GM12878 (cell line): ENCODE measurements at regions of chr15 and their contacts with region 1.

Region 1: DNA sequence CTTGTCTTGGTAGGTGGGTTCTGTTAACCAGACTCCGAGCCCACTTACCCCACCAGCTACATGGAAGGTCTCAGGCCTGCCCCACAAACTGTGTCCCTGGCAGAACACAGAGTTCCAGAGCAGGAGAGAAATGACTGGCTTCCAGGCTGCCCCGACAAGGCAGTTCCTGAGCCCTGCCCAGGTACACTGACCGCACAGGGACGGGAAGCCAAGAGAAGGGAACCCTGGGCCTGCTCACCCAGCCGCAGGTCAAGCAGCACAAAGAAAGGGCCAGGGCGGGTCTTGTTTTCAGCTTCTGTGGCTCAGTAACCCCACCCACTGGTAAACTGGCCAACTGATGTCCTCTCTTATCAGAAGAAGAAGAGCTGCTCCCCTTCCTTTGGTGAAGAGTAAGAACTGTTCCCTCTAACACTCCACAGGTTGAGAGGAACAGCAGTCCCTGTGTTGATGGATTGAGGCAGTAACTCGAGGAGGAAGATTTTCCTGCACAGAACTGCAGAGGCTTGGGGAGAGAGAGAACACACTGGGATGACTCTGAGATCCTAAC is 68.4 kb downstream of the CRTC3 start:
- DNase-seq: peak; percentile 46
- ATAC-seq: peak; percentile 64
- H3K4me3 ChIP-seq: peak overlapping the region; percentile 44; the same call in 1 of the 2 replicates
- H3K27ac ChIP-seq: peak overlapping the region; percentile 82
- H3K4me1 ChIP-seq: peaks cover 54% of the 10 kb centered on the region
- H3K27me3 ChIP-seq: no peaks in the 10 kb centered on the region
- CTCF ChIP-seq: peak; percentile 32 to 57 (median 44); a peak in 5 of 6 replicates
- EP300 ChIP-seq: no peak
- POLR2A ChIP-seq: peak; percentile 59
- RAD21 ChIP-seq: peak; percentile 70

Region 2: DNA sequence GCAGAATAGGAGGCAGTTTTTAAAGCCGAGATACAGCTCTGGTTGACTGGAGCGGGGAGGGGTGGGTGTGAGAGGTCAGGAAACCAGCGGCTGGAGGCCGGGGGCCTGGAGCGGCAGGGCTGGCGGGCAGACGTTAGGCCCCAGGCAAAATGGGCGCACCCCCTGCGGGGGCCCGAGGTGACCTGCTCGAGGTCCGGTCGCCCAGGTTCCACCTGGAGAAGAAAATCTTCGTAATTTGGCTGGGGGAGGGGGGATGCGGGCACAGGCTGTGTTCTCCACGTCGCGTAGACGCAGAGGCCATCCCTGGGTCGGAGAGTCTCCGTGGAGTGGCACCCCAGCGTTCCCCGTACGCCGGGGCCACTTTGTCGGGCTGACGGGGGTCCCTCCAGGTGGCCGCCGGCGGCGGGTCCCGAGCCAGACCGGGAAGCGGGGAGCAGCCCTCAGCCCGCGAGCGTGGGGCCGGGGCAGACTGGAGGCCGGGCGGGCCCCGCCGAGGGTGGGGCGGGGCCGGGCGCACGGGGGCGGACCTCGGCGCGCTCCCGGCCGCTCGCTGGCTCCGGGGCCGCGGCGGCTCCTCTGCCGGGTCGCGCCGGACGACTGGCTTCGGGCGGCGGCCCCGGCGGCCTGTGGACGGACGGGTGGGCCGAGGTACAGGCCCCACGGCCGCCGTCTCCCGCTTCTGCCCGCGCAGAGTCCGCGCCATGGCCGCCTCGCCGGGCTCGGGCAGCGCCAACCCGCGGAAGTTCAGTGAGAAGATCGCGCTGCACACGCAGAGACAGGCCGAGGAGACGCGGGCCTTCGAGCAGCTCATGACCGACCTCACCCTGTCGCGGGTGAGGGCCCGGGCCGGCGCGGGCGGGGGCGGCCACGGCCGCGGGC is 68.5 kb before region 1 on chr15 and contains the start of gene CRTC3:
- CTCF ChIA-PET with region 1: interaction called, 13 read pairs
- POLR2A ChIA-PET with region 1: interaction called, 3 read pairs
- RAD21 ChIA-PET with region 1: interaction called, 12 read pairs
- SMC1A ChIA-PET with region 1: interaction called, 8 read pairs
- in situ Hi-C with region 1: no loop called
- intact Hi-C with region 1: loop called (anchors 5 kb)
- DNase-seq: no peak
- ATAC-seq: peak; percentile 89
- H3K4me3 ChIP-seq: peak within 1 kb of the TSS; percentile 71
- H3K27ac ChIP-seq: peak within 1 kb of the TSS; percentile 84
- H3K4me1 ChIP-seq: peaks cover 7% of the 10 kb centered on the region
- H3K27me3 ChIP-seq: no peaks in the 10 kb centered on the region
- CTCF ChIP-seq: 0 out of 6 replicates have a peak, but pooled peaks have one; percentile 1 to 15 (median 6)
- EP300 ChIP-seq: no peak
- POLR2A ChIP-seq: peak; percentile 82
- RAD21 ChIP-seq: no peak
- polyA plus RNA-seq, gene CRTC3: 3.5 to 4.2 TPM

Region 3: DNA sequence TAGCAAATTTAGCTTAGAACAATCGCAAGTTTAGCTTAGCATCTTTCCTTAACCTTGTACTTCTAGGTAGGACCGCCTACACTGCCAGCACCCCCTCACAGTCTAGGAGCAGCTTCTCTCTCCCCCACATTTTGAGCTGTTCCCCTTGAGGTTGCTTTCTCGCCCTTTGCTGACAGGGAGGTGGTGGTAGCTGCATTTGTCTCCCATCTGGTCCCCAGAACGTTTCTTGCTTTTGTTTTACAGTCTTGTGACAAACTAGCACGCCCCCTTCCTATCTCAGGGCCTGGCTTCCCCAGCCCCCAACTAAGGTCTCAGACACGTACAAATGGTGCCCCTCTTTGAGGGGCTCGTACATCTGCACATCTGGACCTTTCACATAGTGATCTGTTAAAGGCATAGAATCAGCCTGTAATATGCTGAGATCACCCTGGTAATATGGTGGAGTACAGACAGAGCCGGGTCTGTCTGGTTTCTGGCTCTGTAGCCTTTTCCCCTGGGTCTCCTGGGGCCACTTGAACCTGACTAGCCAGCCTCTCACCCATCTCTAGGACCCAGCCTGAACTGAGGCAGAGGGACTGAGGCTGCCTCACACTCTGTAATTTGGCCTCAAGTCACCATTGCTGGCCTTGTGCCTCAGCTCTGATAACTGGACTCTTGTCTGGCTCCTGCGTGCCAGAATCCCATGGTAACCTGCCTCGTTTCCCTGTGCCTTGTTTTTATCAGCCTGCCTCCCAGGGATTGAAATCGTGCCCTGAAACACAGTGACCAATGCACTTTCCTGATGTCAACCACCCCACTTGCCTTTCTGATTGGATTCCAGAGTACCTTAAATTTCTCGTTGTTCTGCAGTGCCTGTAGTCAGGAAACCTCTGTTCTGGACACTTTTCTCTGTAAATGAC is 40.7 kb before region 1 on chr15:
- CTCF ChIA-PET with region 1: interaction called, 12 read pairs
- POLR2A ChIA-PET with region 1: interaction called, 7 read pairs
- RAD21 ChIA-PET with region 1: interaction called, 16 read pairs
- SMC1A ChIA-PET with region 1: interaction called, 17 read pairs
- in situ Hi-C with region 1: no loop called
- intact Hi-C with region 1: loop called (anchors 5 kb)
- DNase-seq: no peak
- ATAC-seq: peak; percentile 39
- H3K4me3 ChIP-seq: no peak overlapping the region
- H3K27ac ChIP-seq: peak overlapping the region; percentile 80
- H3K4me1 ChIP-seq: peaks cover 22% of the 10 kb centered on the region
- H3K27me3 ChIP-seq: no peaks in the 10 kb centered on the region
- CTCF ChIP-seq: no peak
- EP300 ChIP-seq: no peak
- POLR2A ChIP-seq: peak; percentile 53
- RAD21 ChIP-seq: no peak

Region 4: DNA sequence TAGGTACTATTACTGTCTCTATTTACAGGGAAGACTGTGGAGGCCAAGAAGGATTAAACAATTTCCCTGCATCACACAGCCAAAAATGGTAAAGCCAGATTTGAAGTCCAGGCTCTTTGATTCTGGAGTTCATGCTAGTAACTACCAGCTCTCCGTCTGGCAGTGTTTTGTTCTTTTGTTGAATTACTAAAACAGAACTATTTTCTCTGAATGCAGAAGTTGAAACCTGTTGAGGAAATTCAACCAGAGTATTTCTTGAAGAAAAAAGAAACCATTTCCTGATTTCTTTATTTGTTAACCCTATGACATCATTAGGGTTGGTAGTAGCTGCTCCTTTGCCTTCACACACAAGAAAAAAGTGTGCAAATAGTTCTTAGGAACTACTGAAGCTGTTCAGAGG is 34.1 kb before region 1 on chr15:
- CTCF ChIA-PET with region 1: interaction called, 11 read pairs
- POLR2A ChIA-PET with region 1: interaction called, 3 read pairs
- RAD21 ChIA-PET with region 1: interaction called, 11 read pairs
- SMC1A ChIA-PET with region 1: interaction called, 10 read pairs
- in situ Hi-C with region 1: no loop called
- intact Hi-C with region 1: loop called (anchors 5 kb)
- DNase-seq: no peak
- ATAC-seq: peak; percentile 61
- H3K4me3 ChIP-seq: peak overlapping the region; percentile 14; the same call in 1 of the 2 replicates
- H3K27ac ChIP-seq: peak overlapping the region; percentile 63
- H3K4me1 ChIP-seq: peaks cover 45% of the 10 kb centered on the region
- H3K27me3 ChIP-seq: no peaks in the 10 kb centered on the region
- CTCF ChIP-seq: no peak
- EP300 ChIP-seq: no peak
- POLR2A ChIP-seq: no peak
- RAD21 ChIP-seq: no peak

Region 5: GRCh38 chr15:90571063-90571541 is 27.0 kb before region 1 on chr15:
- CTCF ChIA-PET with region 1: interaction called, 4 read pairs
- POLR2A ChIA-PET with region 1: interaction called, 9 read pairs
- RAD21 ChIA-PET with region 1: interaction called, 5 read pairs
- SMC1A ChIA-PET with region 1: interaction called, 13 read pairs
- in situ Hi-C with region 1: no loop called
- intact Hi-C with region 1: no loop called
- DNase-seq: no peak
- ATAC-seq: peak; percentile 83
- H3K4me3 ChIP-seq: peak overlapping the region; percentile 3; the same call in 1 of the 2 replicates
- H3K27ac ChIP-seq: peak overlapping the region; percentile 61
- H3K4me1 ChIP-seq: peaks cover 32% of the 10 kb centered on the region
- H3K27me3 ChIP-seq: no peaks in the 10 kb centered on the region
- CTCF ChIP-seq: no peak
- EP300 ChIP-seq: no peak
- POLR2A ChIP-seq: no peak
- RAD21 ChIP-seq: no peak

Region 6: DNA sequence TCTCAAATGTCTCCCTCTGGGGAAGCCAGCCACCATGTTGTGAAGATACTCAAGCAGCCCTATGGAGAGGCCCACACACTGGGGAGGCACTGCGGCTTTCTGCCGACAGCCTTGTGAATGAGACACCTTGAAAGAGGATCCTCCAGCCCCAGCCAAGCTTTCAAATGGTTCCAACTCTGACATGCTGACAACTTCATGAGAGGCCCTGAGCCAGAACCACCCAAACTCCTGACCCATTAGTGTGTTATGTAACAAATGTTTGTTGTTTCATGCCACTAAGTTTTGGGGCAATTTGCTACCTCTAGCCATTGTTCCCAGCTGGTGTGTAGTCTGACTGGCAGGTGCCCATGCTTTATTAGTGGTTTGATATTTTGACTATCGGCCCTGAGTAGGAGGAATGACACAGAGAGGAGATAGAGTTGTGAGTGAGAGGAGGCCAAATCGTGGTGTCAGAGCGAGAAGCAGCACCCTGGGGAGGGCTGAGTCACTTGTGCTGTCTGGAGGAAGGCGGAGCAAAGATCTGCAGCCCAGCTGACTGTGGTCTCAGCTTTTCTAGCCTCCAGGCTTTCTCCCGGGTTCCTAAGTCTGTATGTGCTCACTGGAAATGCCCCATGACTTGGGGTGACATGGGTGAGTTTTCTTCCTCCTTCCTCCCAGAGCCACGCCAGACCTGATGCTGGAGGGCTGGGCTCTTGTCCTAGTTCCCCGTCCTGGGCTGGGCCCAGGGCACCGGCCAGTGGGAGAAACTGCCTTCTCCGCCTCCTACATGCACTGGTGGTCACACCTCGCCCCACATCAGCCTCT is 62.3 kb after region 1 on chr15:
- CTCF ChIA-PET with region 1: no interaction called
- POLR2A ChIA-PET with region 1: no interaction called
- RAD21 ChIA-PET with region 1: interaction called, 3 read pairs
- SMC1A ChIA-PET with region 1: no interaction called
- in situ Hi-C with region 1: no loop called
- intact Hi-C with region 1: loop called (anchors 2 kb)
- DNase-seq: peak; percentile 86
- ATAC-seq: peak; percentile 72
- H3K4me3 ChIP-seq: peak overlapping the region; percentile 58
- H3K27ac ChIP-seq: peak overlapping the region; percentile 100
- H3K4me1 ChIP-seq: peaks cover 73% of the 10 kb centered on the region
- H3K27me3 ChIP-seq: no peaks in the 10 kb centered on the region
- CTCF ChIP-seq: no peak
- EP300 ChIP-seq: 0 out of 4 replicates have a peak, but pooled peaks of 1 of the 2 experiments have one; percentile 29
- POLR2A ChIP-seq: peak; percentile 77
- RAD21 ChIP-seq: no peak

Region 7: DNA sequence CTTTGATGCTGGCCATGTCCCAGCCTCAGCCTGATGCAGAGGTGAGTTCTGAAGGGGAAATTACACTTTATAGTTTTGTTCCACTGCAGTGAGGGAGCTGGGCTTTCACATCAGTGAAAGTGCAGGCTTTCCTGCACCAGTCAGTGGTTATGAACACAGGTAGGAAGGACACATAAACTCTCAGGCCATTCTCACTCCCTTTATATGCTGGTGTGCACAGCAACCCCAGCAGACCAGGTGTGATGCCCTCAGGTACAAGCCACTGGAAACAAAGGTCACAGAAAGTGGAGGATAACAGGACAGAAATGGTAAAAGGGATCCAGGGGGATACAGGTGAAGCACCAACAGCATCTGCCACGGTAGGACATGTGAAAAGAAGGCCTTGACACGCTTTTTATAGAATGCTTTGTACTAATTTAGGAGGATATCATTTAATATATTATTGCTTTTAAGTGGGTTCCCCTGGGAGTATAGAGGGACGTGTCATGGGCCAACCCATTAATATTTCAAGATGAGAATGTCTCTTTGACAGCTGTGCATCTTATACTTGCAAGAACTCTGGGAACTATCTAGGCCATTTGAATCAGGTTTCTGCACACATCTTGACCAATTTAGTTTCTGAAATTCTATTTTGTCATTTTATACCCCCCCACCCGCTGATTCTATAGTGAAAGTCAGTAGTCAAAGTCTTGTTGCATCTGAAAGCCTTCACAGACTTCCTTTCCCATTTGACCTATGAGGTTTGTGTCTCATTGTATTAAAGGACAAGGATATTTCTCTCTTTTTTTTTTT is 94.1 kb after region 1 on chr15:
- CTCF ChIA-PET with region 1: interaction called, 3 read pairs
- POLR2A ChIA-PET with region 1: no interaction called
- RAD21 ChIA-PET with region 1: no interaction called
- SMC1A ChIA-PET with region 1: no interaction called
- in situ Hi-C with region 1: no loop called
- intact Hi-C with region 1: loop called (anchors 5 kb)
- DNase-seq: peak; percentile 84
- ATAC-seq: peak; percentile 73
- H3K4me3 ChIP-seq: no peak overlapping the region
- H3K27ac ChIP-seq: peak overlapping the region; percentile 99
- H3K4me1 ChIP-seq: peaks cover 41% of the 10 kb centered on the region
- H3K27me3 ChIP-seq: no peaks in the 10 kb centered on the region
- CTCF ChIP-seq: no peak
- EP300 ChIP-seq: no peak
- POLR2A ChIP-seq: peak; percentile 68
- RAD21 ChIP-seq: peak; percentile 19; the same call in 1 of the 2 replicates

Region 8: DNA sequence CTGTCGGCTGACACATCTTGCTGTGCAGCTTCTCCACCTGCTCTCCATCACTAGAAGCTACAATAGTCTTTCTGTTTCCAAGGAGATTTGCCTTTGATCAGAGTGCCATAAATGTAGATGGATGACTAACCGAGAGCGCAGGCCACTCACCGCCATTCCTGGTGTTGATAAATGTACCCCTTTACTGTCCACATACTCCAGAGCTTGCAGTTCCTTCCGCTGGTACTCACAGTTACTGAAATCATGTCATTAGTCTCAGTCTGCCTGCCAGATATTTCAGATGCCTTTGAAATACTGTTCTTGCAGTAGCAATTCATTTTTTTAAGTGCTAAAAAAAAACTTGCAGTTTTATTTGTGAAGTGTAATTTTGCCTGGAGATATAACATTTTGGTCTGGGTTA is 191.4 kb after region 1 on chr15:
- CTCF ChIA-PET with region 1: no interaction called
- POLR2A ChIA-PET with region 1: no interaction called
- RAD21 ChIA-PET with region 1: no interaction called
- SMC1A ChIA-PET with region 1: no interaction called
- in situ Hi-C with region 1: no loop called
- intact Hi-C with region 1: no loop called
- DNase-seq: no peak
- ATAC-seq: no peak
- H3K4me3 ChIP-seq: no peak overlapping the region
- H3K27ac ChIP-seq: no peak overlapping the region
- H3K4me1 ChIP-seq: peaks cover 11% of the 10 kb centered on the region
- H3K27me3 ChIP-seq: no peaks in the 10 kb centered on the region
- CTCF ChIP-seq: no peak
- EP300 ChIP-seq: no peak
- POLR2A ChIP-seq: no peak
- RAD21 ChIP-seq: no peak

Region 9: DNA sequence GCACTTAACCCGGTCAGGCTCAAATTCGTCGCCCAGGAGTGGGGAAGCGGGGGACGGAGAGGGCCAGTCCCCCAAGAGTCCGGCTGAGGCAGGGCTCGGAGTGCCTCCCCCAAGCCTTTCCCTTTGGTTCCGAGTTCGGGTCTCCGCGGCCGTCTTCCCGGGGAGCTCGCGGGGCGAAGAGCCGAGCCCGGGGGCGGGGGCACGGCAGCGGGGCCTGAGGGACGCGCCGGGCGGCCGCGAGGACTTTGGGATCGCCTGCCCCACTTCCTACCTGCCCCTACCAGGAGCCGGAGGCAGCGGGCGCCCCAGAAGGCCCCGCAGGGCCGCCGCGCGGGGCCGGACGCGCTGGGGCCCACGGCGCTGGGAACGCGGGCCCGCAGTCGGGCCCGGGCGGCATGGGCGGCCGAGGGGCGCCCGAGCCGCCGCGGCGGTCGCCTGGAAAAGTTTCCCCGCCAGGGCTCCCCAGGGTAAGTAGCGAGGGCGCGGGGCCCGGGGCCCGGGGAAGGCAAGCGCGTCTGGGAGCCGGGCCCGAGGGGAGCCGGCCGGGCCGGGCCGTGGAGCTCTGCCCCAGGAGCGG is 273.1 kb after region 1 on chr15:
- CTCF ChIA-PET with region 1: no interaction called
- POLR2A ChIA-PET with region 1: no interaction called
- RAD21 ChIA-PET with region 1: no interaction called
- SMC1A ChIA-PET with region 1: no interaction called
- in situ Hi-C with region 1: no loop called
- intact Hi-C with region 1: no loop called
- DNase-seq: no peak
- ATAC-seq: peak; percentile 23
- H3K4me3 ChIP-seq: peak overlapping the region; percentile 94
- H3K27ac ChIP-seq: peak overlapping the region; percentile 79
- H3K4me1 ChIP-seq: peaks cover 28% of the 10 kb centered on the region
- H3K27me3 ChIP-seq: no peaks in the 10 kb centered on the region
- CTCF ChIP-seq: no peak
- EP300 ChIP-seq: no peak
- POLR2A ChIP-seq: no peak
- RAD21 ChIP-seq: no peak